Caco-2 (cell line): ENCODE measurements at regions of chr18 and their contacts with region 1.

Region 1: DNA sequence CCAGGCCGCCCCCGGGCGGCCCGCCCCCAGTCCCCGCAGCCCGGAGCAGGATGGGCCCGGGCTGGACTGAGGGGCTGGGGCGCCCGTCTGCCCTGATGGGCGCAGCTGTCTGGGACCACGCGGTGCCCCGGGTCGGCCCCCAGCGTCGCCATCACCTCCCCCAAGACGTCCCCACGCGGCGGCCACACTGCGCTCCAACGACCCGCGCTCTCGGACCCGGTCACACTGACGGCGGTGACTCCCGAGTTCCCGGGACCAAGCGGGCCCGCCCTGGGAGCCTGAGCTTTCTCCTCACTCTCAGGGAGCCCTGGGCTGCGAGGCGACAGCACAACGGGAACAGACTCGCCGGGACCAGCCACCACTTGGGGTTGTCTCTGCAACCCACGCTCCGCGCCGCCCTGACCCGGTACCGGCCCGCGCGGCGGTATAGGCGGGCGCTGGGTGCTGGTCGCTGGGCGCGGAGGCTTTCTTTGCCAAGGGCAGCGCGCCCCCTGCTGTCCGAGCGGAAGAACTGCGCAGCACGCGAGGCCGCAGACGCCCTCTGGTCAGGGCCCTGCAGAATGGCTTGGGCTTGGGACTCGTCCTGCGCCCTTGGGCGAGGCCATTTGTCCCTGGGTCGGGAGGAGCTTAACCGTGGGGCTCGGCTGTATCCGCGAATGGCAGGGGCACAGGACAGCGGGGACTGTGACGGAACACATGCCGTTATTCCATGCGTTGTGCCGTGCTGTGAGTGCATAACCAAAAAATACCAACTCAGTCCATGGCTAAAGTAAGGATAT is 54.8 kb upstream of the ANKRD62 start:
- DNase-seq: peak; percentile 83 to 90
- H3K4me3 ChIP-seq: peak overlapping the region; percentile 52
- H3K4me3 Mint-ChIP-seq: peak overlapping the region; percentile 80
- H3K27ac Mint-ChIP-seq: no peak overlapping the region
- H3K4me1 ChIP-seq: peaks cover 3% of the 10 kb centered on the region; the same call in 1 of the 2 replicates
- H3K4me1 Mint-ChIP-seq: no peaks in the 10 kb centered on the region
- H3K27me3 ChIP-seq: no peaks in the 10 kb centered on the region
- H3K27me3 Mint-ChIP-seq: peaks cover 2% of the 10 kb centered on the region
- CTCF ChIP-seq: peak; percentile 96 to 97

Region 2: GRCh38 chr18:11925800-11926481 is 112.9 kb before region 1 on chr18:
- CTCF ChIA-PET with region 1: no interaction called
- POLR2A ChIA-PET with region 1: no interaction called
- intact Hi-C with region 1: no loop called
- DNase-seq: peak; percentile 76 to 88
- H3K4me3 ChIP-seq: no peak overlapping the region
- H3K4me3 Mint-ChIP-seq: peak overlapping the region; percentile 9
- H3K27ac Mint-ChIP-seq: peak overlapping the region; percentile 42
- H3K4me1 ChIP-seq: peaks cover 33% of the 10 kb centered on the region
- H3K4me1 Mint-ChIP-seq: peaks cover 31% of the 10 kb centered on the region
- H3K27me3 ChIP-seq: no peaks in the 10 kb centered on the region
- H3K27me3 Mint-ChIP-seq: no peaks in the 10 kb centered on the region
- CTCF ChIP-seq: no peak

Region 3: GRCh38 chr18:11937874-11938478 is 100.9 kb before region 1 on chr18:
- CTCF ChIA-PET with region 1: interaction called, 16 read pairs
- POLR2A ChIA-PET with region 1: no interaction called
- intact Hi-C with region 1: loop called (anchors 1 kb)
- DNase-seq: peak; percentile 67 to 83
- H3K4me3 ChIP-seq: no peak overlapping the region
- H3K4me3 Mint-ChIP-seq: no peak overlapping the region
- H3K27ac Mint-ChIP-seq: no peak overlapping the region
- H3K4me1 ChIP-seq: no peaks in the 10 kb centered on the region; the same call in 1 of the 2 replicates
- H3K4me1 Mint-ChIP-seq: no peaks in the 10 kb centered on the region
- H3K27me3 ChIP-seq: no peaks in the 10 kb centered on the region
- H3K27me3 Mint-ChIP-seq: no peaks in the 10 kb centered on the region
- CTCF ChIP-seq: peak; percentile 76 to 79

Region 4: GRCh38 chr18:12317664-12318333 is 279.0 kb after region 1 on chr18:
- CTCF ChIA-PET with region 1: no interaction called
- POLR2A ChIA-PET with region 1: no interaction called
- intact Hi-C with region 1: no loop called
- DNase-seq: no peak
- H3K4me3 ChIP-seq: no peak overlapping the region
- H3K4me3 Mint-ChIP-seq: no peak overlapping the region
- H3K27ac Mint-ChIP-seq: peak overlapping the region; percentile 26
- H3K4me1 ChIP-seq: 0 out of 2 replicates have a peak, but pooled peaks cover 2% of the 10 kb centered on the region
- H3K4me1 Mint-ChIP-seq: no peaks in the 10 kb centered on the region
- H3K27me3 ChIP-seq: no peaks in the 10 kb centered on the region
- H3K27me3 Mint-ChIP-seq: no peaks in the 10 kb centered on the region
- CTCF ChIP-seq: no peak